GM23248 (cell line): ENCODE measurements at regions of chr5 and their contacts with region 1.

Region 1: DNA sequence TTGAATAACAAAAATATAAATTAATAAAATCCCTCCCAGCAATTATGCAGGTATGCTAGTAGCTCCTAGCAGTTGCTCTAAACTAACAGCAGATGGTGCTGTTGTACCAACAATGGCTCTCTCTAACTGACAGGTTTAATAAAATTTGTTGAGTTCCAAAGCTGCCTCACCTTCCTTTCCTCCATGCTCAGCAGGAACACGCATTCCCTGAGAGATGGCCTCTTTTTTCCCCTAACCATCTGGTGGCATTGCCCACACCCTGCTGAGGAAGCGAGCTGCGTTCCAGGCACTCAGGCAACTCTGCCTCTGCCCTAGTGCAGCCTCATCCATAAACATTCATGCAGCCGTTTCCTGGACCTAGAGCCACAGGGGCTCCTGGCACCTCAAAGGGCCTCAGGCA is 106.2 kb downstream of the KLHL3 start:
- DNase-seq: peak; percentile 71
- H3K4me3 ChIP-seq: no peak overlapping the region
- H3K27ac ChIP-seq: no peak overlapping the region
- H3K4me1 ChIP-seq: 0 out of 2 replicates have a peak, but pooled peaks cover 6% of the 10 kb centered on the region
- H3K27me3 ChIP-seq: no peaks in the 10 kb centered on the region

Region 2: DNA sequence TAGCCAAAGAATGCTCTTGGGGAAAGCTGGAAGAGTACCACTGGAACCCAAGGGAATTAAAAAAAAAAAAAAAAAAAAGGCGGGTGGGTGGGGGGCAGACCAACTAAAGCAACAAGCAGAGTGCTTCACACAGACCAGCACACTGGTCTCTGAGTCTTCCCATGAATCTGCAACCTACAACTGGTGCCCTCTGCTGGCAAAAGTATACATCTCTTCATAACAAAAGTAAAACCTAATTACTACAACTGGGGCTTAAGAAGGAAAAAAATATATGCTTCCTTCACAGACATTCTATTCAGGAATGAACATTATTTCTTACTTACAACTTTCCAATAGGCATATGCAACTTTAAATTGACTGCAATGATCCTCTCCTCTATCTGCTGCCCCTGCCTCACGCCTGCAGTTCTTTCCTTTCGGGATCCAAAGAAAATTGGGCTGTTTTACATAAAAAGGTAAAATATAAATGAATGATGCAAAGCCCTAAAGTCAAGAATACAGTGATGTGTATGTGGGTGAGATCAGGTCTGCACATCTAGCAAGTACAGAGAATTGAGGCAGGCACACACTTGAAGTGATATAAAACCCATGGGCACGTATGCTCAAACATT is 113.5 kb after region 1 on chr5:
- in situ Hi-C with region 1: loop called (anchors 25 kb)
- DNase-seq: peak; percentile 84
- H3K4me3 ChIP-seq: no peak overlapping the region
- H3K27ac ChIP-seq: no peak overlapping the region
- H3K4me1 ChIP-seq: no peaks in the 10 kb centered on the region
- H3K27me3 ChIP-seq: no peaks in the 10 kb centered on the region

Region 3: DNA sequence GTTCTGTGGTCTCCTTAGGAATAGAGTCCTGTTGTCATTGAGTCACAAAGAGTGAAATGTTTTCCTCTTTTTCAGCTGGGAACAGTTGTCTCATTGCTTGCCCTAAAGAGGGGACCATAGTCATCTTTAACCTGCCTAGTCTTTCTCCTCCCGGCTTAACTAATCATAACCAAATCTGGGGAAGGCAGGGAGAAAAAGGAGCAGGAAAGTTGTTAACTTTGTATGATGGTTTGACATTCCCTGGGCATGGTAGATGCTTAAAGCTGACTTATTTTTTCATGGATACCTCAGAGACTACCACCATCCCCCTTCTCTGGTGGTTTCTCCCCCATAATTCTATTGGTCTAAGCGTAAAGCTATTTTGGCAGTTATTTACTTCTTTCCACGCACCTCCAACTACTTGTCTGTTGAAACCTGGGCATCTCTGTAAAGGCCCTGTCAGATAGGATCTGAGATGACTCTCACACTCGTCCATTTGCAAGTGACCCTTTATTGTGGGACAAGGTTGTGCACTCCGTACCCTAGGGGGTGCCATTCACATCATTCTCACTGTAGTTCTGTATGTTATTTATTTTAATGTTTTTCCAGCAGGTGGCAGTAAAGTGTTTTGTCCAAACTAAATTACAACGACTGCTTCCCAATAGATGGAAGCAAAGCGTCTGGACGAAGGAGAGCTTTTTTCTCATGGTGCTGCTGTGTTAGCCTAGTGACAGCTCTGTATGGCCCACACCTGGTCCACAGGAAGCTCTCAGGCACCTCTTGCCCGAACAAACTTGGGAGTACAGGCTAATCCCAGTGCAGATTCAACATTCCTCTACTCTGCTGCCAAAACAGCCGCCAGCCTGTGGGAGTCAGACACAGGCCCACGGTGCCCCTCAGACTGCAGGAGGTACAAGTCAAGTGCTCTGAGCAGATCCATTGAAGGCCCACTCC is 406.2 kb after region 1 on chr5:
- in situ Hi-C with region 1: loop called (anchors 25 kb)
- DNase-seq: peak; percentile 91
- H3K4me3 ChIP-seq: no peak overlapping the region
- H3K27ac ChIP-seq: no peak overlapping the region
- H3K4me1 ChIP-seq: peaks cover 21% of the 10 kb centered on the region
- H3K27me3 ChIP-seq: no peaks in the 10 kb centered on the region